ENCODE measurements at regions of chr9 and their contacts with region 1.

Region 1: DNA sequence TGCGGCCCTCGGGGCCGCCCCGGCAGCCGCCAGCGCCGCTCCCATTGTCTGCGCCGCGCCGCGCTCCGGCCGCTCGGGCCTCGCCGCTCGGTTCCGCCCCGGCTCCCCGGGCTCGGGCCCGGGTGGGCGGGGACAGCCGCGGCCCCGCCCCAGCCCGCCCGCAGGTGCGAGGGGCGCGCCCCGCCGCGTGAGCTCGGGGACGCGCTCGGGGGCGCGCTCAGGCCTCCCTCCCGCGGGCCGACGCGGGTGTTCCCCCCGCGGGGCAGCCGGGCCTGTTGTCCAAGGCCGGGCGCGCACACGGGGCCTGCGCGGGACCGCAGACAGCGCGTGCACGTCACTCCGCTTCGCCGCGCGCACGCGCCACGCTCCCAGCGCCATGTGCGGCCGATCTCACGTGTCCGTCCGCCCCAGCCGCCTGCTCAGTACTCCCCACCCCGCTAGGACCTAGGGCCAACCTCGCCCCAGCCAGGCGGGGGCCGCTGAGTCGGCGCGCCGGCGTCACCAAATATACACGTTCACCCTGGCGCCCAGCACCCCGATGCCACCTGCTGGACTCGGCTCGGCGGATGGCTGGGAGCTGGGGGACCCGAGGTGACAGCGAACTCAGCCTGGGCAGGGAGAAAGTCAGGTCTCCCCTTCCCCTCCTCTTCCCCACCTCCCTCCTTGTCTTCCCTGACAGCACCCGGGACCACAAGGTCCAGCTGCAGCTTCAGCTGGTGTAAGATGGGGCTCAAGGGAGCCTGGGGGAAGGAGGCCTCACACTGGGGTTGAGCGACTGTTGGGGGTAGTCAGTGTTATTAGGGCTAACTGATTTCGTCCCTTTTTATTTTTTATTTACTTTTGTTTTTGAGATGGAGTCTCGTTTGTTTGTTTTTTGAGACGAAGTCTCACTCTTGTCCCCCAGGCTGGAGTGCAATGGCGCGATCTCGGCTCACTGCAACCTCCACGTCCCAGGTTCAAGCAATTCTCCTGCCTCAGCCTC is 14.3 kb downstream of the GBGT1 start:
- DNase-seq: peak; percentile 88
- ATAC-seq: peak; percentile 76 to 87 (median 80)
- H3K4me3 ChIP-seq: peak overlapping the region; percentile 28 to 80 (median 76)
- H3K27ac ChIP-seq: peak overlapping the region; percentile 76 to 91 (median 84)
- H3K4me1 ChIP-seq: peaks cover 18 to 44% (median 32%) of the 10 kb centered on the region in 9 donors
- H3K27me3 ChIP-seq: no peaks in the 10 kb centered on the region
- CTCF ChIP-seq: peak in 7 of 9 donors; percentile 4 to 53 (median 40)

Region 2: GRCh38 chr9:133030317-133031129 is 118.9 kb before region 1 on chr9 and contains the start of gene GTF3C5:
- intact Hi-C with region 1: loop called in 3 of 10 experiments (anchors 2 to 10 kb)
- DNase-seq: peak; percentile 89 to 96
- ATAC-seq: peak; percentile 98 to 99 (median 99)
- H3K4me3 ChIP-seq: peak within 1 kb of the TSS; percentile 67 to 99 (median 82)
- H3K27ac ChIP-seq: peak within 1 kb of the TSS; percentile 39 to 96 (median 90)
- H3K4me1 ChIP-seq: peaks cover 9 to 41% (median 29%) of the 10 kb centered on the region in 9 donors
- H3K27me3 ChIP-seq: no peaks in the 10 kb centered on the region
- CTCF ChIP-seq: peak in 3 of 9 donors; percentile 5 to 18 (median 9)
- total RNA-seq, gene GTF3C5: 29.4 to 44.4 (median 35.2) TPM

Region 3: GRCh38 chr9:133048569-133048968 is 100.8 kb before region 1 on chr9:
- intact Hi-C with region 1: loop called in 9 of 10 experiments (anchors 1 to 10 kb)
- DNase-seq: no peak
- ATAC-seq: peak in 3 of 8 donors; percentile 45 to 66 (median 54)
- H3K4me3 ChIP-seq: no peak overlapping the region
- H3K27ac ChIP-seq: no peak overlapping the region
- H3K4me1 ChIP-seq: peaks cover 0 to 2% (median 0%) of the 10 kb centered on the region in 9 donors
- H3K27me3 ChIP-seq: no peaks in the 10 kb centered on the region
- CTCF ChIP-seq: peak in 7 of 9 donors; percentile 32 to 54 (median 50)

Region 4: DNA sequence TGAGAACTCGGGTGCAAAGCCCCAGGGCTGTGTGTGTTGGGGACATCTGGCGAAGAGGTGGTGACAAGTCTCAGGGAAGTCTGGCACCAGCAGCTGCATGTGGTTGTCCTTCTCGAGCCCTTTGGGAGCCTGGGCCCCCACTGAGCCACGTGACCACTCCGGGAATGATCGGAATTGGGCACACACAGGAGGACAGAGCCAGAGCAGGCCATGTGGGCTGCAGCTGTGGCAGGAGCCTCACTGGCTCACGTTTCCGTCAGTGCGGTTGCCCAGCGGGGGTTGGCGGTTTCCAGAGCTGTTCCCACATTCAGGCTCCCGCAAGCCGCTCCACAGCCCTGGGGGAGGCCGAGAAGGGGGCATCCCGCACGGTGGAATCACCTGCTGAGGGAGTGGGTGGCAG is 94.5 kb before region 1 on chr9:
- intact Hi-C with region 1: loop called in 2 of 10 experiments (anchors 5 to 10 kb)
- DNase-seq: peak; percentile 74 to 82
- ATAC-seq: peak; percentile 82 to 95 (median 90)
- H3K4me3 ChIP-seq: no peak overlapping the region
- H3K27ac ChIP-seq: peak overlapping the region; percentile 71 to 95 (median 89)
- H3K4me1 ChIP-seq: peaks cover 7 to 32% (median 19%) of the 10 kb centered on the region in 9 donors
- H3K27me3 ChIP-seq: no peaks in the 10 kb centered on the region
- CTCF ChIP-seq: peak in 1 of 9 donors; percentile 1

Region 5: GRCh38 chr9:133075925-133076630 is 73.3 kb before region 1 on chr9:
- intact Hi-C with region 1: no loop called
- DNase-seq: no peak
- ATAC-seq: no peak
- H3K4me3 ChIP-seq: no peak overlapping the region
- H3K27ac ChIP-seq: no peak overlapping the region
- H3K4me1 ChIP-seq: no peaks in the 10 kb centered on the region
- H3K27me3 ChIP-seq: no peaks in the 10 kb centered on the region
- CTCF ChIP-seq: no peak

Region 6: DNA sequence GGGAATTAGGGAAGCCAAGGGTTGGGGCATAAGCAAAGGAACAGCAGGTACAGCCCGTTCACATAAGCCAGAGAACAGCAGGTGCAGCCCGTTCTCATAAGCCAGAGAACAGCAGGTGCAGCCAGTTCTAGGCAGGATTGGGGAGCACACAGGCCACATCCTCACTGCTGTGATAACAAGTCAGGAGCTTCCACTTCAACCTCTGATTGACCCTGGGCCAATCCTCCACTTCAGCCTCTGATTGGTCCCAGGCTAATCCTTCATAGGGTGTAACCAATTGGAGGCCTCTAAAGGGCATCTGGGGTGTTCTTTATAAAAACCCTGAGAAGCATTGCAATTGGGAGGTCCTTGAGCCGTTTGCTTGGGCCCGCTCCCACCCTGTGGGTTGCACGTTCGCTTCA is 60.1 kb before region 1 on chr9:
- intact Hi-C with region 1: no loop called
- DNase-seq: no peak
- ATAC-seq: peak in 2 of 8 donors; percentile 22 to 23
- H3K4me3 ChIP-seq: no peak overlapping the region
- H3K27ac ChIP-seq: no peak overlapping the region
- H3K4me1 ChIP-seq: peaks cover 0 to 15% (median 0%) of the 10 kb centered on the region in 9 donors
- H3K27me3 ChIP-seq: no peaks in the 10 kb centered on the region
- CTCF ChIP-seq: no peak

Region 7: GRCh38 chr9:133103183-133103986 is 46.0 kb before region 1 on chr9:
- intact Hi-C with region 1: loop called (anchors 1 to 2 kb)
- DNase-seq: peak; percentile 61 to 78
- ATAC-seq: peak; percentile 62 to 81 (median 74)
- H3K4me3 ChIP-seq: no peak overlapping the region
- H3K27ac ChIP-seq: peak overlapping the region in 2 of 10 donors; percentile 30 to 32
- H3K4me1 ChIP-seq: peaks cover 0 to 7% (median 0%) of the 10 kb centered on the region in 9 donors
- H3K27me3 ChIP-seq: no peaks in the 10 kb centered on the region
- CTCF ChIP-seq: peak; percentile 95 to 99 (median 96)

Region 8: GRCh38 chr9:133759146-133759900 is 609.9 kb after region 1 on chr9:
- intact Hi-C with region 1: no loop called
- DNase-seq: peak; percentile 34 to 40
- ATAC-seq: peak; percentile 30 to 86 (median 76)
- H3K4me3 ChIP-seq: peak overlapping the region in 2 of 10 donors; percentile 24
- H3K27ac ChIP-seq: no peak overlapping the region
- H3K4me1 ChIP-seq: peaks cover 0 to 7% (median 0%) of the 10 kb centered on the region in 9 donors
- H3K27me3 ChIP-seq: peaks cover 0 to 16% (median 0%) of the 10 kb centered on the region in 7 donors
- CTCF ChIP-seq: no peak

Measured in heart right ventricle (tissue), 16 donors.